GM23248 (cell line): ENCODE measurements at regions of chr5 and their contacts with region 1.

Region 1: DNA sequence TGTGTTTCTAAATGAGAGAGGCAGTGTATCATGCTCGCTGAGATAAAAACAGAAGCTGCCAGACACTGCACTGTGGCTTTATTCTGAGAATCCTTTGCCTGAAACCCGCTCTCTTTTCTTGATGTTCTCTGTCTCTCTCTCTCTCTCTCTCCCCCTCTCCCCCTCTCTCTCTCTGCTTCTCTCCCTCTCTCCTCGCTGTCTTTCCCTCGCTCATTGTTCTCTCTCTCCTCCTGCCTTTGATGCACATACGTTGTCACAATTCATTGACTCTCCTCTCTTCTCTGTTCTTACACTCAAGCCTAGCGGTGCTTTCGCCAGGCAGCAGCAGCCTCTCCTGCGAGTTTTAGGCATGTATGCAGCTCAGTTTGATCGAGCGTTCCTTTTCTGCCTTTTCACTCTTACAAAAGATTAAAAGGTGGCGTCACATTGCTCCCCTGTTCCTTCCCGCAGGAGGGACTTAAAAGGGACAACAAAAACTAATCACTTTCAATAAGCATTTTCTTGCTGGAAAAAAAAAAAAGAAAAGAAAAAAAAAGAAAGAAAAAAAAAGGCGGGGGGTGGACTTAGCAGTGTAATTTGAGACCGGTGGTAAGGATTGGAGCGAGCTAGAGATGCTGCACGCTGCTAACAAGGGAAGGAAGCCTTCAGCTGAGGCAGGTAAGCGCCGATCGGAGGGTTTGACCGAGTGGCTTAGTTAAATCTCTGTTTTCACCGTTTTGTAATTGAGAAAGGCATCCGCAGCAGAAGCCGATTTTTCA is 717.9 kb upstream of the WWC1 start:
- DNase-seq: peak; percentile 80
- H3K4me3 ChIP-seq: peak overlapping the region; percentile 90
- H3K27ac ChIP-seq: peak overlapping the region; percentile 44
- H3K4me1 ChIP-seq: peaks cover 12% of the 10 kb centered on the region; the same call in 1 of the 2 replicates
- H3K27me3 ChIP-seq: no peaks in the 10 kb centered on the region

Region 2: GRCh38 chr5:165630261-165630778 is 1943.2 kb before region 1 on chr5:
- in situ Hi-C with region 1: loop called (anchors 25 kb)
- DNase-seq: peak; percentile 56
- H3K4me3 ChIP-seq: no peak overlapping the region
- H3K27ac ChIP-seq: no peak overlapping the region
- H3K4me1 ChIP-seq: no peaks in the 10 kb centered on the region
- H3K27me3 ChIP-seq: no peaks in the 10 kb centered on the region

Region 3: GRCh38 chr5:167709625-167710024 is 136.1 kb after region 1 on chr5:
- in situ Hi-C with region 1: loop called (anchors 10 kb)
- DNase-seq: no peak
- H3K4me3 ChIP-seq: no peak overlapping the region
- H3K27ac ChIP-seq: no peak overlapping the region
- H3K4me1 ChIP-seq: peaks cover 19% of the 10 kb centered on the region
- H3K27me3 ChIP-seq: no peaks in the 10 kb centered on the region

Region 4: GRCh38 chr5:167899490-167900070 is 326.0 kb after region 1 on chr5:
- in situ Hi-C with region 1: no loop called
- DNase-seq: peak; percentile 86
- H3K4me3 ChIP-seq: no peak overlapping the region
- H3K27ac ChIP-seq: peak overlapping the region; percentile 55
- H3K4me1 ChIP-seq: peaks cover 39% of the 10 kb centered on the region
- H3K27me3 ChIP-seq: no peaks in the 10 kb centered on the region